OCI-LY7 (cell line): ENCODE measurements at regions of chr7 and their contacts with region 1.

Region 1: DNA sequence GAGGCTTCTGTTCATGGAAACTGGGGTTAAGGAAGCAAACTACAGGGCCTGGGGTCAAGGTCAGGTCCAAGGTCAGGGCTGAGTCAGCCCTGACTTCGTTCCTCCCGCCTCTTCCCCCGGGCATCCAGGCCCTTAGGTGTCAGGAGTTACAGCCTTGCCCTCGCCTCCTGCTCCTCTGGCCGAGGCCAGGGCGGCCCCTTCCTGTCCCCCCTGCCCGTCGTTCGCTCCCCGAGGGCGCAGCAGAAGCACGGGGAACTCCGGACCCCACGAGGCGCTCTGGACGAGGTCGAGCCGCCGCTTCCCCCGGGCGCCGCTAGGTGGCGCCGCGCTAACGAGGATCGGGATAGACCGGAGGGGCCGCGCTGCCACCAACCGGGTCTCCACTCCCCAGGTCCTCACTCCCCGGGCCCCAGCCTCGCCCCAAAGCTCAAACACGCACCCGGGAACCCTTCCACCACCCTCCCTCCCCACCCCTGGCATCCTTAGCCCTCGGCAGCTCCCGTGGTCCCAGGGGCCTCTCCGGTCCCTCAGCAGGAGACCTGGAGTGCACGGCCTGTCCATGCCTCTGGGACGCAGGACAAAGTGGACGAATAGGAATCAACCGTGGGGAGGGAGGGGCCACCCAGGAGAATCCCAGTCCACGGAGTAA is 59.2 kb upstream of the MYL10 start:
- DNase-seq: peak; percentile 88
- H3K4me3 ChIP-seq: peak overlapping the region; percentile 23
- H3K27ac ChIP-seq: peak overlapping the region; percentile 45
- H3K4me1 ChIP-seq: peaks cover 12% of the 10 kb centered on the region
- CTCF ChIP-seq: peak; percentile 92

Region 2: DNA sequence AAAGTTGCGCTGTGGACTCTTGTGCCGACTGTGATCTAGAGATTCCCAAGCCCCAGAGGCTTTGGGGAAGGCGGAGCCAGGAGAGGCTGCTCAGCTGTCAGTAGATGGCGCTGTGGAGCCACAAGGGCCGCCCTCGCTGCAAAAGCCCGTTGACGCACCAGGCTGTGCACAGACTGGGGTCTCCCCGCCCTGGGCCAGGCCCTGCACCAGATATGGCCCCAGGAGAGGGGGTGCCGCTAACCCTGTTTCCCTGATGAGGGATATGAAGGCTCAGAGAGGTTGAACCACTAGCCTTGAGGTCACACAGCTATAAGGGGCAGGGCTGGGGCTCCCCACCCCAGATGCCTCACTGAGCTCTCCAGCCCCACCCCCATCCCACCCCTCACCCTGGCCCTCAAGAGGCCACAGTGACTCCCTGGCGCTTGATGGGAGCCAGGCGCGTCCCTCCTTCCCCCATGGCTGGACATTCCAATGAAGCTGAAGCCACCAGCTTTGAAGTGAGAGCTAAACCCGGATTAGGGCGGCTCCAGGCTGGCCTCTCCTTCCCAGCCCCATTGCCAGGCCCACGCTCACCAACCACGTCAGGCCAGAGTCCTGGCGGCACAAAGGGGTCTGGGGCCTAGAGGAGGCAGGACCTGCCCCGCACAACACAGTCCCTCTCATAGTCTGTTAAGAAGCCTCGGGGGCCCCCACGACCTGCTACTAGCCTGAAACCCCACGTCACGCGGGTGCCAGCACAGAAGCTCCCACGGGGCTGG is 85.6 kb before region 1 on chr7:
- CTCF ChIA-PET with region 1: interaction called, 3 read pairs
- POLR2A ChIA-PET with region 1: interaction called, 3 read pairs
- intact Hi-C with region 1: loop called (anchors 2 kb)
- DNase-seq: peak; percentile 85
- H3K4me3 ChIP-seq: no peak overlapping the region
- H3K27ac ChIP-seq: no peak overlapping the region
- H3K4me1 ChIP-seq: peaks cover 10% of the 10 kb centered on the region
- CTCF ChIP-seq: peak; percentile 98

Region 3: DNA sequence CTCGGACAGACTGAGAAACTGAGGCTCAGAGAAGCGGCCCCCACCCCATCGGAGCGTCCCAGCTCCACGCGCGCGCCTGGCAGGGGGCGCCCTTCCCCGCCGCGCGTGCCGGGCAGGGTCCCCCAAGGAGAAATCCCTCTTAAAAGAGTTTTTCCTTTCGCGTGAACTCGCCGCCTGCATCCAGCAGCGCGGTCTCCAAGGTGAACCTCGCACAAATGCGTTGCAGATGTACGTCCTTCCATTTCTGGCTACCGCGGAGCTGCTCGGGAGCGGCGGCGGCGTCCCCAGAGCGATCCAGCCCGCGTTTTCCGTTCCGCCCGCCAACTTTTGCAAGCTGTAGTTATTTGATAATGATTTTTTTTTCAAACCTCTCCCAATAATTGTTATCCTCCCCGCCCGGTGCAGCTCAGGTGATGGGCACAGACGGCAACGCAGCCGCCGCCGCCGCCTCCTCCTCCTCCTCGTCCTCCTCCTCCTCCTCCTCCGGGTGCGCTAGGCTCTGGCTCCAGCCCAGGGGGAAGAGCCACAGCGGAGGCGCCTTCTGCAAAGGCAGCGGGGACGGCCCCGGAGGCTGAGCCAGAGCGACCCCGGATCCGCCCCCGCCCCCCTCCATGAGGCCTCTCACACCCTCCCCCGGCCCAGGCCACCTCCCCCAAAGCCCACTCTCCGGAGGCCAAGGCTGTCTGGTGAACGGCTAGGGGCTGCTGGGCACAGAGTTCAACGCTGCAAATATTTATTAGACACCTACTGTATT is 55.1 kb after region 1 on chr7:
- CTCF ChIA-PET with region 1: interaction called, 3 read pairs
- POLR2A ChIA-PET with region 1: interaction called, 3 read pairs
- intact Hi-C with region 1: loop called (anchors 1 kb)
- DNase-seq: peak; percentile 84
- H3K4me3 ChIP-seq: peak overlapping the region; percentile 76
- H3K27ac ChIP-seq: peak overlapping the region; percentile 93
- H3K4me1 ChIP-seq: peaks cover 80% of the 10 kb centered on the region
- CTCF ChIP-seq: peak; percentile 83

Region 4: GRCh38 chr7:102236592-102237287 is 548.4 kb after region 1 on chr7:
- CTCF ChIA-PET with region 1: no interaction called
- POLR2A ChIA-PET with region 1: no interaction called
- intact Hi-C with region 1: loop called (anchors 5 kb)
- DNase-seq: peak; percentile 57
- H3K4me3 ChIP-seq: no peak overlapping the region
- H3K27ac ChIP-seq: no peak overlapping the region
- H3K4me1 ChIP-seq: peaks cover 10% of the 10 kb centered on the region
- CTCF ChIP-seq: peak; percentile 85

Region 5: DNA sequence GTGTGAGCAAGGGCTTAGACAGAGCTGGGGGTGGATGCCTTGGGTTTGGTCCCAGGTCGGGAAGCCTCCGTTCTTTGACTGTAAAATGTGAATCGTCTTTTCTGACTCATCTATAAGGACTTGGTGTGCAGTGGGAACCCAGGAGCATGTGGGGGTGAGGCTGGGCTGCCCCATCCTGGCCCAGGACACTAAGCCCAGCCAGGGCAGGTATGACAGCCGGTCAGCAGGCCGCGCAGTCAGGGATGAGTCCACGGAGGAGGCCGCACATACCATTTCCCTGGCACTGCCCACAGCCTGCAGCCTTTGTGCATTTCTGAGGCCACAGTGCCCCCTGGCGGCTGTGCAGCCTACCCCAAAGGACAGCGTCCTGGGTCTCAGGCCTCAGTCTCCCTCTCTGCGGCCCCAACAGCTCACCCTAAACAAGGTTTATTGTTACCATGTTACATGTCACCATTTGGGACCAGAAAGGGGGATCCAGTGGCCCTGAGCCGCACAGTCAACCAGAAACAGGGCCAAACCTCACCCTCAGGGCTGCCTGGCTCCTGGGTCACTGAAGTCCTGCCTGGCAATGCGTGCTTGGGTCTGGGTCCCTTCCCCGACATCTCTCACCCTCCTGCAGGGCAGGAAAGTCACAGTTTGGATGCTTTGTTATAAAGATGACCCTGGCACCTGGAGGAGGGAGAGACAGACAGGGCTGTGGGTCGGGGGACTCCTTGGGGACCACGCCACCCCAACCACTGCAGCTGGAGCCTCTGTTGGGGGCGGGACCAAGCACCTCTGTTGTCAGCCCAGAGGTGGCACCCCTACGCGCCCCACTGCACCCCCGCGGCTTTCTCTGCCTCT is 584.0 kb after region 1 on chr7:
- CTCF ChIA-PET with region 1: interaction called, 3 read pairs
- POLR2A ChIA-PET with region 1: no interaction called
- intact Hi-C with region 1: loop called (anchors 5 kb)
- DNase-seq: peak; percentile 80
- H3K4me3 ChIP-seq: no peak overlapping the region
- H3K27ac ChIP-seq: no peak overlapping the region
- H3K4me1 ChIP-seq: peaks cover 17% of the 10 kb centered on the region
- CTCF ChIP-seq: peak; percentile 97